ENCODE measurements at regions of chr17 and their contacts with region 1.

Region 1: GRCh38 chr17:75896415-75897159 is at the start of gene TRIM65:
- DNase-seq: peak; percentile 86 to 93 (median 88)
- H3K4me3 ChIP-seq: peak within 1 kb of the TSS; percentile 29 to 84 (median 64)
- H3K27ac ChIP-seq: peak within 1 kb of the TSS; percentile 39 to 96 (median 86)
- H3K4me1 ChIP-seq: peaks cover 11 to 22% of the 10 kb centered on the region in 2 donors
- H3K27me3 ChIP-seq: no peaks in the 10 kb centered on the region
- CTCF ChIP-seq: peak in 2 of 6 experiments; percentile 21 to 30
- POLR2A ChIP-seq: peak; percentile 69 to 74
- total RNA-seq, gene TRIM65: 6.5 to 46.9 (median 18.6) TPM

Region 2: DNA sequence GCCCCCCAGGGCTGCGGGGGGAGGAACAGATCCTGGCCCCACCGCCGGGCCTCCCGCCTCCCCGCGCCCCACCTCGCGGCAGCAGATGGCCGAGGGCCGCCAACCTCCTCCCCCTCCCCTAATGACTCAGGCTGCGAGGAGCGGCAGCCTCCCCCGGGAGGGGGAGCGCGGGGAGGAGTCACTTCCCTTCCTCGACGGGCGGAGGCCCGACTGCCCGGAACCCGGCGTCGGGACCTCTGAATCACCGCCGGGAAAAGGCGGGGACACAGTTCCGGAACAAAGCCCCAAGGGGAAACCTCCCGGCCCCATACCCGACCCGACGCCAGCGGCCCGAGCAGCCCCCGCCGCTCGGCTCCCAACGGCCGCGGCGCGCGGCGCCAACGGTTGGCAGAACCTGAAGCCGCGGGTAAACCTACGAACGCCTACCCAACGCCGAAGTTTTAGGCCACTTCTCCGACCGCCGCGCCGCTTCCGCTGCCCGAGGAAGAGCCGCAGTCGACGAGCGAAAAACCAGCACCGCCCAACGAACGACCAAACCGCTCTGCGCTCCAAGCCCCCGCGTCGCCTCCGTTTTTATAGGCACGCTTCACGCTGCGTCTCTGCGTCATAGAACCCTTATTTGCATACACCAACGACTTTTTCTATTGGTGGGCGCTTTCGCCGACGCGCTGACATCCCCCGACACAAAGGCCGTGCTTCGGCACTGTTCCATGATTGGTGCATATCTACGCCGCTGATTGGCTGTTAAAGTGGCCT is 117.2 kb before region 1 on chr17:
- intact Hi-C with region 1: loop called in 1 of 2 experiments (anchors 10 kb)
- DNase-seq: peak; percentile 96 to 99 (median 99)
- H3K4me3 ChIP-seq: peak overlapping the region; percentile 78 to 93 (median 82)
- H3K27ac ChIP-seq: peak overlapping the region; percentile 94 to 99 (median 98)
- H3K4me1 ChIP-seq: peaks cover 20 to 33% of the 10 kb centered on the region in 2 donors
- H3K27me3 ChIP-seq: no peaks in the 10 kb centered on the region
- CTCF ChIP-seq: peak in 2 of 6 experiments; percentile 0 to 25
- POLR2A ChIP-seq: peak; percentile 100